Head of caudate nucleus (tissue), 42 donors: ENCODE measurements at regions of chr14 and their contacts with region 1.

Region 1: DNA sequence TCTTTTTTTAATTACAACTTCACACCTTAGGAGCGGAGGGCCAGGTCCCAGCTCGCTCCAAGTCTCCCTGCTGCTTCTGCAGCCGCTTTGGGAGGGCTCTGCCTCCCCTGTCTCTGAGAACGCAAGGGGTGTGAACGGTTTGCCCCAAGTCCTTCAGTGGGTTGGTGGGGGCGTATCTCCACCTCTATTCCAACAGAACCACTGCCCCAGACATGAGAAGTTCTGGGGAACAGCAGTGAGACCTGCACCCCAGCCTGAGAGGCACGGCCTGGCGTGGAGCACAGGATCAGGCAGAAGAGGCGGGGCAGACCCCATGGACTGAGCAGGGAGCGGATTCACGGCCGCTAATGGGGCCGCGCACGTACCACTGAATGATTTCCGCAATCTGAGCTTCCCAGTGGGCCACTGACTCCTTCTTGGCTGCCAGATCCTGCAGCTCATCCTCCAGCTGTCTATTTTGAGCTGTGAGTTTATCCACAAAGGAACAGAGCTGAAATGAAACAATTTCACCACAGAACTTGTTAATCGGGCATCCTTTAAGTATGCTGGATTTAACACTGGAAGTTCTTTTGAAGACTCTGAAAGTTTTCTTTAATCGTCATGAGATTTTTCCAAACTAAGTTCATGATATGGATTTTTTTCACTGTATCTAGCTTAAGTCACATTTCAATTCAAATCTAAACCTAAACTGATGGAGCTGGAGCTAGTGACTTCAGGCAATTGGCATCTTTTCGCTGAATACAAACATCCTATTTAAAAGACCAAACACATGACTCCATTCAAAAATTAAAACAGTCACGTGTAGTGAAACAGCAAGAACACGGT is 44.4 kb downstream of the AMN start:
- DNase-seq: no peak

Region 2: DNA sequence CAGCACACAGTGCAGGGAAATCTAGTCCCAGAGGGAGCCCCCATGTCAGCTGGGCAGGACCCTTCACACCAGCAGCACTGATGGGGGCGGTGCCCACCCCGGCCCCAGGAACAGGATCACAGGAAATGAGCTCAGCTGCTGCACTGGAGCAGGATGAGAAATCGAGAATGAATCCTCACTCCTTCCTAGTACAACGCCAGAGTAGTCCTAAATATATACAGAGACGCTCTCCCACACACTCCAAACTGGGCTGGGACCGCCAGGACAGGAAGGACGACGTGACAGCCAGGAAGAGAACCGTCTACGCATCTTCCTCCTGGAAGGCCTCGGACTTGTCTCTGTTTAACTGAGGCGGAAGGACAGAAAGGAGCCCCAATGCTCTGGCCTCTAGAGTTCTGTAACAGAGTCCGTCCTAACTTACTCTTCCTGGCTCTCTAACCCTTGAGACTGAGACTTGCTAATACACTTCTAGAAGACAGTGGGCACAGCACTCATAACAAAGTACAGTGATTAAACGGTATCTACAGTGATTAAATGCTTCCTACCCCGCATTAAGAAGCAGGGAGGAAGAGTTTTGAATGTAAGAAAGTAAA is 57.1 kb after region 1 on chr14:
- intact Hi-C with region 1: no loop called
- DNase-seq: peak in 1 of 42 donors; percentile 40

Region 3: DNA sequence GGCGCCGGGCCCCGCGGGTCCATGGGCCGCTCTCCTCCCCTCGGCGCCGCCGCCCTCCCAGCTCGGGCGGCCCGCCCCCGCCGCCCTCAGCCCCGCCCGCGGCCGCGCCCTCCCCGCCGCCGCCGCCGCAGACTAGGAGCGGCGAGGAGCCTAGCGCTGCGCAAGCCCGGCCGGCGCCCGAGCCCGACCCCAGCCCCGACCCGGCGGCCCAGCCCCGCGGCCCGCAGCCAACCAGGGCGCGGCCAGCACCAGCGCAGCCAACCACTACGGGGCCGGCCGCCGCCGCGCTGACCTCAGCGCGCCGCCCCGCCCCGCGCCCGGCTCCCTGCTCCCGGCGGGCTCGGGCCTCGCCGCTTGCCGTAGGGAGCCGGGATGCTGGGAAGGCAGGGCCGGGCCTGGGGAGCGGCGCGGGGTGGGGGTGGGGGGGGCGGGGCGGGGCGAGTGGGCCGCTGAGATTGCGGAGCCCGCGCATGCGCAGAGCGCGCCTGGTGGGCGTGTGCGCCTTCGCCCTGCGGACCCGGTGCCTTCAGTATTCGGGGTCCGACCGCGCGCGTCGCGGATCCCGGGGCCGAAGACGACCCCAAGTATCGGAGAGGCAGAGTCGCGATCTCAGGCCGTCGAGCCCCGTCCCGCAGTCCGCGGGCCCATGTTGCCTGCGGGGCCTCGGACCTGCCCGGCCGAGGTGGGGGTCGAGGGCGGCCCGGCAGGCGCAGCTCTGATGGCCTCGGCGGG is 90.6 kb after region 1 on chr14 and contains the start of gene CDC42BPB:
- intact Hi-C with region 1: loop called (anchors 5 kb)
- DNase-seq: peak; percentile 60 to 95 (median 89)